Activated naive CD4-positive, alpha-beta T cell treated with anti-CD3 and anti-CD28 coated beads for 36 hours (primary cell): ENCODE measurements at regions of chr6 and their contacts with region 1.

Region 1: DNA sequence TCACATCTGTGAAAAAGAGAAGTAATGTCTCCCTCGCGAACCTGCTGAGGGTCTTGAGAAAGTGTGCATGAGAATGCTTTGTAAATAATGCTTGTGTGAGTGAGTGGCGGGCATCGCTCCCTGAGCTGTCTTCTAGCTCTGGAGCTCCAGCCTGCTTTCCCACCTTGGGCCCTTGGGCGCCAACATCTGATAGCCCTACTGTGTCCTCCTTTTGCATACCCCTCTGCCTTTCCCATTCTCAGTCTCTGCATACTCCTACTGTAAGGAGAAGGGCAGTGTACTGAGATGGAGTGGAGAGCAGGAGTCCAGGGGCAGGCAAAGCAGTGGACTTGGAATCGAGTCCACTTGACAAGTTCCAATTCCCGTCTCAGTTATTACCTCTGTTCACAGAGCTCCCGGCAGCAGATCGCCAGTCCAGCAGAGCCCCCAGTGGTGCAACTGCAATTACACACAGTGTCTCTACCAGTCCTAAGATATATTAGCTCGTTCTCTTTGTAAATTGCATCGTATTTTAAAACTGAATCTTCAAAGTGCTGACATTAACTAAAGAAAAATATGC is 847 bp upstream of the NCR2 start:
- DNase-seq: peak; percentile 30
- H3K4me3 Mint-ChIP-seq: no peak overlapping the region
- H3K27ac Mint-ChIP-seq: peak overlapping the region; percentile 78
- H3K4me1 Mint-ChIP-seq: peaks cover 46% of the 10 kb centered on the region
- H3K27me3 Mint-ChIP-seq: no peaks in the 10 kb centered on the region

Region 2: DNA sequence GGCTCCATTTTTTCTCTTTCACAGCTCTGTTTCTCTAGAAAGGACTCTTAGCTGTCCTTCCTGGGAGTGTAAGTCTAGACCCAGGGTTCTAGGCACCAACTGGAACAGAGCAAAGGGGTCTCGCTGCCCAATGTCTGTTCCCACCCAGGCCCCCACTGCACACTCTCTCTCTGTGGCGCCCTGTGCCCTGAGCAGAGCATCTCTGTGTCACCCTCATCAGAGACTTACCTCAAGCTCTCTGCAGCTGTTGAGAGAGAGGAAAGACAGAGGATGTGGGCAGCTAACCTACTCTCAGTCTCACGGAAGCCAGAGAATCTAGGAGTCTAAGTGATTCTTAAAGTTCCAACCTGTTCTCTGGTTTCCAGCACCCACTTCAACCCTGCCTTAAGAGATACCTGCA is 10.3 kb after region 1 on chr6:
- CTCF ChIA-PET with region 1: no interaction called
- intact Hi-C with region 1: loop called (anchors 1 kb)
- DNase-seq: peak; percentile 56
- H3K4me3 Mint-ChIP-seq: no peak overlapping the region
- H3K27ac Mint-ChIP-seq: no peak overlapping the region
- H3K4me1 Mint-ChIP-seq: peaks cover 23% of the 10 kb centered on the region
- H3K27me3 Mint-ChIP-seq: no peaks in the 10 kb centered on the region

Region 3: GRCh38 chr6:41356790-41357189 is 22.2 kb after region 1 on chr6:
- CTCF ChIA-PET with region 1: no interaction called
- intact Hi-C with region 1: no loop called
- DNase-seq: no peak
- H3K4me3 Mint-ChIP-seq: no peak overlapping the region
- H3K27ac Mint-ChIP-seq: no peak overlapping the region
- H3K4me1 Mint-ChIP-seq: no peaks in the 10 kb centered on the region
- H3K27me3 Mint-ChIP-seq: no peaks in the 10 kb centered on the region